Cardiac septum (tissue), 1 donor: ENCODE measurements at regions of chr1 and their contacts with region 1.

Region 1: GRCh38 chr1:89065079-89065868 is at the start of gene GBP1:
- DNase-seq: no peak
- total RNA-seq, gene GBP1: 6.2 TPM

Region 2: DNA sequence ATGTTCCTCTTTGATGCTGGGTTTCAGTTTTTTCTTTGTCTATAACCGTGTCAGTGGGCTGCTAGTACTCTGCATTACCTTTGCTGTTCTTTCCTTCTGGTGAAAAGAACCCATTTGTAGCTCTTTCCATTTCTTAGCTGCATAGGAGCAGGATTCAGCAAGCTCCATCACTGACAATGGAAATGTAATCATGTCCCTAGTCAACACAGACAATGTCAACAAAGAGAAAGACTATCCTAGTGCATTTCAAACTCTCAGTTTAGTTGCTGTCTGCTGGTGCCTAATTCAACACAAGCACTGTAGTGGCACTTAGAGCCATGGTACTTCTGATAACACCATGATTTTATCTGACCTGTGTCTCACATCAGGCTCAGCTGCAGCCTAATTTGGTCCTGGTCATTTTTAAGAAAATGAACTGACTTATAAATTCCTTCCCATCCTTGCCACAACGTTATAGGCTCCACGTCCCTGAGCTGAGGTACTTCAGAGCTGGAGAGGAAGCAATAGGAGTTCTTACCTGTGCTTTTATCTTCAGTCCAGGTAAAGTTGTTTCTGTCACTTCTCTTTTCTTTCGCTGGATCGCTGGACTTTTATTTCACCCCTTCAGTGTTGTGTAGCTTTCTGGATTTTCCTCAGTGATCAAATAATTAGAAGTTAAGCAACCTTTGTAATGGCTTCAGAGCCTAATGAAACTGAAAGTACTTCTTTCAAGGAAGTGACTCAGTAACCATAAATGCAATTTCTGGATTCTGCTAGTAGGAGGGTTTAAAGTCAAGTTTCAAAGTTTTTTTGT is 42.9 kb before region 1 on chr1 and contains the start of gene GBP3:
- intact Hi-C with region 1: loop called (anchors 5 kb)
- DNase-seq: no peak
- total RNA-seq, gene GBP3: 6.6 TPM

Region 3: DNA sequence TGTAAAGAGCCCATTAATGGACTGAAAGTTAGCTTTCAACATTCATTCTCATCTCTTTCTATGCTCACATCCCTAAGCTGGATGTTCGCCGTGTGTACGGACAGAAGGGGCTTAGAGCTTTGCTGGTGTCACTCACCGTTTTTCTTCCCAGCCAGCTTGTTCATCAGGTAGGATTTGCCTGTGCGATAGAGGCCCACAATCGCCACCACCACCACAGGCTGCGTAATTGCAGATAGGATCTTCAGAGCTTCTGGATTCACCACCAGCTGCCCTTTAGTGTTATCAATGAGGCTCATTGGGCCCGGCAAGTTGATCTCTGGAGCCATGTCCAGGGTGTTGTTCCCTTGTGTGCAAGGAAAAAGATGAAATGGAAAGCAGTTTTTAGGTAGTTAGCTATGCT is 56.4 kb after region 1 on chr1:
- intact Hi-C with region 1: loop called (anchors 5 kb)
- DNase-seq: no peak